GM10248 (cell line): ENCODE measurements at regions of chr9 and their contacts with region 1.

Region 1: GRCh38 chr9:34403554-34404380 is 27.1 kb upstream of the MYORG start:
- DNase-seq: peak; percentile 57
- CTCF ChIP-seq: peak; percentile 94

Region 2: GRCh38 chr9:34392511-34392910 is 11.3 kb before region 1 on chr9:
- CTCF ChIA-PET with region 1: interaction called, 17 read pairs
- POLR2A ChIA-PET with region 1: no interaction called
- DNase-seq: no peak
- CTCF ChIP-seq: no peak

Region 3: GRCh38 chr9:34430843-34431437 is 27.2 kb after region 1 on chr9:
- CTCF ChIA-PET with region 1: interaction called, 19 read pairs
- POLR2A ChIA-PET with region 1: no interaction called
- DNase-seq: peak; percentile 35
- CTCF ChIP-seq: no peak

Region 4: DNA sequence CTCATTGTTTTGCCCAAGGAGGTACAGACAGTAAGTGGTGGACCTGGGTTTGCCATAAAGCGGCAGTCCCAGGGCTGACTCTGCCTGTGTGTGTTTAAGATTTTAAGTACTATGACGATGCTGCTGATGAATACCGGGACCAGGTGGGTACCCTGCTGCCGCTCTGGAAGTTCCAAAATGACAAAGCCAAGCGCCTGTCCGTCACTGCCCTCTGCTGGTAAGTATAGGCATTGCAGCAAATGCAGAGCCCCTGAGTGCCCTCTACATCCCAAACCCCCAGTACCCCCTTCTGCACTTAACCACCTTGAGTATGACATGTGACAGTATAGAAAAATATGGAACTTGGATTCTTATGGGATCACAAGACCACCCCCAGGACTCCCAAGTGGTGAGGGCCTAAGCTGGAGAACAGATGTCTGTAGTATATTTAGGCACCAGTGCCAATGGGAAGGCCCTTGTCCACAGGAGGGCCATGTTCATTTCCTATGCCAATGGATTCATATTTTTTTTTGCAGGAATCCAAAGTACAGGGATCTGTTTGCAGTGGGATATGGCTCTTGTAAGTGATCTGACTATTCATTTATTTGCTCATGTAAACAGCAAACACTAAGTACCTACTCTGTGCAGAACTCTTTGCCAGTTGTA is 97.0 kb after region 1 on chr9:
- CTCF ChIA-PET with region 1: interaction called, 43 read pairs
- POLR2A ChIA-PET with region 1: no interaction called
- DNase-seq: peak; percentile 70
- CTCF ChIP-seq: peak; percentile 93

Region 5: GRCh38 chr9:34578241-34579103 is 174.7 kb after region 1 on chr9:
- CTCF ChIA-PET with region 1: interaction called, 11 read pairs
- POLR2A ChIA-PET with region 1: no interaction called
- DNase-seq: no peak
- CTCF ChIP-seq: no peak

Region 6: DNA sequence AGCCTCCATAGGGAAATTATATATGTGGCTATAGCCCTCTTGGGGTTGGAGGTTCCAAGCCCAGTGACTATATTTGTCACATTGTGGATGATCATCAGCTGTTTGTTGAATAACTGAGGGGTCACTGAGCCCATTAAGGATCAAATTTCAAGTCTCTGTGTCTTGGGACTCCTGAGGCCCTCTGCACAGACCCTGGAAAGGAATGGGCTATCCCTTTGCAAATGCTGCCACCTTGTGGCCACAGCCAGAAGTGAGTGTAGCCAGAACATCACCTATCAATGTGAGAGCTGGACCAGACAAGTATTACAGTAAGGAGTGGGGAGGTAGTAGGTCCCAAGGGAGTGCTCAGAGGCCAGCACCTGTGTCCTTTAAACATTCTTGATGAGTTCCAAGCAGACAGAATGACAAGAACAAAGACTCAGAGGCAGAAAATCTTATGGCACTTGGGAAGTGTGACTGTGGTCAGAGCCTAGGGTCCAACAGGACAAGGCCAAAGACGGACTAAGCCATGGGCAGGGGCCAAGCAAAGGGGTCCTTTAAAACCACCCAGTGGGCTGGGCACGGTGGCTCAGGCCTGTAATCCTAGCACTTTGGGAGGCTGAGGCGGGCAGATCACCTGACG is 200.0 kb after region 1 on chr9:
- CTCF ChIA-PET with region 1: interaction called, 12 read pairs
- POLR2A ChIA-PET with region 1: no interaction called
- DNase-seq: peak; percentile 83
- CTCF ChIP-seq: peak; percentile 91

Region 7: GRCh38 chr9:34689116-34689470 is 285.3 kb after region 1 on chr9:
- CTCF ChIA-PET with region 1: no interaction called
- POLR2A ChIA-PET with region 1: no interaction called
- DNase-seq: no peak
- CTCF ChIP-seq: no peak